Activated T-helper 1 cell treated with anti-CD3 and anti-CD28 coated beads, Interleukin-12 subunit alpha, Interleukin-12 subunit beta, Interleukin-2, Interleukin-4 antibody, amounts not matched to agents 30 ng/mL and 10 ng/mL and 1 ng/mL, durations not matched to agents 14 hours and 24 hours and 36 hours (primary cell): ENCODE measurements at regions of chr19 and their contacts with region 1.

Region 1: DNA sequence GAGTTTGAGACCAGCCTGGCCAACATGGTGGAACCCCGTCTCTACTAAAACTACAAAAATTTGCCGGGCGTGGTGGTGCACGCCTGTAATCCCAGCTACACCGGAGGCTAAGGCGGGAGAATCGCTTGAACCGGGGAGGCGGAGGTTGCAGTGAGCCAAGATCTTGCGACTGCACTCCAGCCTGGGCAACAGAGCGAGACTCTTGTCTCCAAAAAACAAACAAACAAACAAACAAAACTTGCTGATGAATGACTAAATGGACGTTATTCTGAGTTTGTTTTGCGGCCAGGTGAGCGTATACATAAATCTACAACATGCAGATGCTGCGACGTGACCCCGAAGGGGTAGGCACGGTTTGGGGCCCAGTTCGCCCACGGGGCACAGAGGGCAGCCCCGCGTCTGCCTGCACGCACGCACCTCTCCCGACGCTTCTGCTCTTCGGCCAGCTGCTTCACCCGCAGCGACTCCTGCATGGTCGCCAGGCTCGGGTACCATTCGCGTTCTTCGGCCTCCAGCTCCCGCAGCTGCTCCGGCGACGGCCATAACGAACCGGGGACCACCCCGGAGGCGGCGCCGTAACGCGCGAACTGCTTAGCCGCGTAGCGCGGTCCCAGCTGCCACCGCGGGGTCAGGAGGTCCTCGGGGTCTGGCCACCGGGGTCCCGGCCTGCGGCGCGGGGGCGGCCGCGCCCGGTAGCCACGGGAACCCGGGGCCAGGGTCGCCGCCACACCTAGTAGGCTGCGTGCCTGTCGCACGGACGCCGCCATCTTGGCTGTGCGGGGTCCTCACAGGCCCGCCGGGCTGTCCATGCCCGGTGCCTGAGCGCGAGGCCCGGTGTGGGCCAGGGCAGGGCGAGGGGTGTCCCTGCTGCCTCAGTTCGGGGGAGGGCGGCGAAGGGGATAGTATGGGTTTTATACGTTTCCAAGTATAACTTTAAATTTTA is at the start of gene GADD45GIP1:
- DNase-seq: peak; percentile 79
- H3K4me3 Mint-ChIP-seq: peak within 1 kb of the TSS; percentile 92
- H3K27ac Mint-ChIP-seq: peak within 1 kb of the TSS; percentile 90
- H3K4me1 Mint-ChIP-seq: peaks cover 27% of the 10 kb centered on the region
- H3K27me3 Mint-ChIP-seq: no peaks in the 10 kb centered on the region
- total RNA-seq, gene GADD45GIP1: 32.1 and 33.2 TPM in 2 replicates

Region 2: DNA sequence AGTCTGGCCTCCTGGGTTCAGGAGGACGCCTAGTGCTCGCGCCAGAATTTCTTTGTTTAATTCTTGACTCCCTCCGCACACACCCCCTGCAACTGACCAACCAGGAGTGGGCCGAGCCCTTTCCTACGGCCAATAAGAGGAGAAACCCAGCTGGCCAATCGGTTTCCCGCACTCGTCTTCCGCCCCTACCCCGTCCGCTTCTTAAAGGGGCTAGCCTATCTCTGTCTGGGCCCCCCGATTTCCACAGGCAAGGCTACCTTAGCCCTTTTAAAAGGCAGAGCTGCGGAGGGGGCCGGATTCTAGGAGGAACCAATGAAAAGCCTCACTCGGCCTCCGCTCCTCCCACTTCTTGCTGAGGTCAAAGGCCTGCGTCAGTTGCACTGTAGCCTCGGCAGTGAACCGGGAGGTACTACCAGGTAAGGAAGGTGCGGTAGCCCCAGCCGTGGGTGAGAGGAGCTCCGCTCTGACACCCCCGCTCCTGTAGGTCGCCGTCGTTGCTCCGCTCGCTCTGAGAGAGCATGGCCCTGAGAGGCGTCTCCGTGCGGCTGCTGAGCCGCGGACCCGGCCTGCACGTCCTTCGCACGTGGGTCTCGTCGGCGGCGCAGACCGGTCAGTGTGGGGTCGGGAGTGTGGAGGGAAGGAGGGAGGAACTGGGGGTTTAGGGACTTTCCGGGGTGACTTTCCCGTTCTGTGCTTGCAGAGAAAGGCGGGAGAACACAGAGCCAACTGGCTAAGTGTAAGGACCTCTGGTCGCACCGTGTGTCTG is 65.7 kb before region 1 on chr19 and contains the start of gene GCDH:
- intact Hi-C with region 1: loop called (anchors 2 kb)
- DNase-seq: peak; percentile 95
- H3K4me3 Mint-ChIP-seq: peak within 1 kb of the TSS; percentile 97
- H3K27ac Mint-ChIP-seq: peak within 1 kb of the TSS; percentile 88
- H3K4me1 Mint-ChIP-seq: peaks cover 13% of the 10 kb centered on the region
- H3K27me3 Mint-ChIP-seq: no peaks in the 10 kb centered on the region
- total RNA-seq, gene GCDH: 65.9 and 68.8 TPM in 2 replicates

Region 3: GRCh38 chr19:12945479-12946091 is 11.1 kb before region 1 on chr19 and contains the start of gene RAD23A:
- intact Hi-C with region 1: loop called (anchors 1 kb)
- DNase-seq: peak; percentile 98
- H3K4me3 Mint-ChIP-seq: peak within 1 kb of the TSS; percentile 92
- H3K27ac Mint-ChIP-seq: peak within 1 kb of the TSS; percentile 94
- H3K4me1 Mint-ChIP-seq: peaks cover 48% of the 10 kb centered on the region
- H3K27me3 Mint-ChIP-seq: no peaks in the 10 kb centered on the region
- total RNA-seq, gene RAD23A: 197 and 202 TPM in 2 replicates

Region 4: GRCh38 chr19:13033819-13034611 is 77.3 kb after region 1 on chr19:
- intact Hi-C with region 1: no loop called
- DNase-seq: no peak
- H3K4me3 Mint-ChIP-seq: no peak overlapping the region
- H3K27ac Mint-ChIP-seq: no peak overlapping the region
- H3K4me1 Mint-ChIP-seq: no peaks in the 10 kb centered on the region
- H3K27me3 Mint-ChIP-seq: peaks cover 9% of the 10 kb centered on the region